A549 (cell line): ENCODE measurements at regions of chr14 and their contacts with region 1.

Region 1: DNA sequence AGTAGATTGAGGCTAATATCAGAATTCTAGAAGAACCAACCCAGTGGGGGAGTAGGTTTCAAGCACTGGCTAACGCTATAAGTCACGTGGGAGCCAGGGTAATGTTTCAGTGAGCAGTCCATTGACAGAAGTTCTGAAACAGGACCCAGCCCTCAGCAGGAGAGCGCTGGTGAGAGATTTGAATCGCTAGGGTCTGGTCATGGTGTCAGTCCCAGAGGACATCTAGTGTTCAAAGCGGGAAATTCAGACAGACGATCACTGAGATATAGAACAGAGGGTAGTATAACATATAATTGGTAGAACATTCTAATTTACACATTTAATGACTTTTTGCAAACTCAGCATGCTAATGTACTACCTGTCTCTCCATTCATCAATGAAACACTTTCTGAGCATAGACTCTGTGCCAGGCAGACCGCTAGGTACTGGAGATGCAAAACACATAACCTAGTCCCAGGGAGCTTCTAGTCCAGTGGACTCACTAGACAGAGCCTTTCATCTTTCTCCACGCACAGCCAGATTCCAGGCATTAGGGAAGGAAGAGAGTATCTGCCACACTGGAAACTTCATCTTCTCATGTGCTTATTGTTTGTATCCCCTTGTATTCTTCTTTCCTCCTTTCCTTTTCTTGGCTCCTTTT is 35.4 kb upstream of the RNASE3 start:
- DNase-seq: peak; percentile 69 to 83
- ATAC-seq: peak; percentile 97 to 98
- H3K4me3 ChIP-seq: no peak overlapping the region
- H3K27ac ChIP-seq: peak overlapping the region in 1 of 2 experiments; percentile 34; a peak in 2 of 6 replicates
- H3K4me1 ChIP-seq: peaks cover 26% of the 10 kb centered on the region
- CTCF ChIP-seq: peak; percentile 86
- EP300 ChIP-seq: no peak
- POLR2A ChIP-seq: no peak
- RAD21 ChIP-seq: peak; percentile 93

Region 2: DNA sequence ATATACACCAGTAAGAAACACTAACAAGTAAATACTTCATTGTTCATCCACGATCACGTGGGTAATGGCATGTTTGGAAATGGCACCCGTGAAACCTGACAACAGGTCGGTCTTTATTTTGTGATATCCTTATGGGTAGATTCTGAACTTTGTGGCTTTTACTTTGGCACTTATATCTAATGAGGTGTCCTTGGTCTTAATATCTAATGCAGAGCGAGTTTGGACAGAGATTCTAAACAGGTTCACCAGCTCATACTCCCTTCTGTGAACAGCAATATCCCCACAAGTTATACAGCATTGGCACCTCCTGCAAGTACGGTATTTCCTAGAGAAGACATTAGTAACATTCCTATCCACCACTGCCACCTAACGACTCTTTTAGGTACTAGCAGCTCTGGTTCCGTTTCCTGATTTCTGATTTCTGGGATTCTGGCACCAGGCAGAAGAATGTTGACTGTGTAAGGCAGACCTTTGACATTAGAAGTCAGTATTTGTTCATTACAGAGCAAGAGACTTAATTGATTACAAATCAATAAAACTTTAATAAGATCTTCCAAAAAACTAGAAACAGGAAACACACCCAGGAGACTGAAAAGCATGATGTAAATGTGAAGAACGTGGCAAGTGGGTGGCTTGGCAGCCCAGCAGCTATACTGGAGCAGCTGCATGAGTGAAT is 164.8 kb before region 1 on chr14:
- CTCF ChIA-PET with region 1: interaction called, 81 read pairs
- POLR2A ChIA-PET with region 1: no interaction called
- DNase-seq: peak; percentile 71 to 81
- ATAC-seq: peak; percentile 82 to 84
- H3K4me3 ChIP-seq: peak overlapping the region; percentile 5; the same call in 1 of the 3 replicates
- H3K27ac ChIP-seq: peak overlapping the region; percentile 2 to 26; a peak in 1 of 6 replicates
- H3K4me1 ChIP-seq: peaks cover 34% of the 10 kb centered on the region
- CTCF ChIP-seq: peak; percentile 88
- EP300 ChIP-seq: no peak
- POLR2A ChIP-seq: no peak
- RAD21 ChIP-seq: peak; percentile 88 to 92

Region 3: DNA sequence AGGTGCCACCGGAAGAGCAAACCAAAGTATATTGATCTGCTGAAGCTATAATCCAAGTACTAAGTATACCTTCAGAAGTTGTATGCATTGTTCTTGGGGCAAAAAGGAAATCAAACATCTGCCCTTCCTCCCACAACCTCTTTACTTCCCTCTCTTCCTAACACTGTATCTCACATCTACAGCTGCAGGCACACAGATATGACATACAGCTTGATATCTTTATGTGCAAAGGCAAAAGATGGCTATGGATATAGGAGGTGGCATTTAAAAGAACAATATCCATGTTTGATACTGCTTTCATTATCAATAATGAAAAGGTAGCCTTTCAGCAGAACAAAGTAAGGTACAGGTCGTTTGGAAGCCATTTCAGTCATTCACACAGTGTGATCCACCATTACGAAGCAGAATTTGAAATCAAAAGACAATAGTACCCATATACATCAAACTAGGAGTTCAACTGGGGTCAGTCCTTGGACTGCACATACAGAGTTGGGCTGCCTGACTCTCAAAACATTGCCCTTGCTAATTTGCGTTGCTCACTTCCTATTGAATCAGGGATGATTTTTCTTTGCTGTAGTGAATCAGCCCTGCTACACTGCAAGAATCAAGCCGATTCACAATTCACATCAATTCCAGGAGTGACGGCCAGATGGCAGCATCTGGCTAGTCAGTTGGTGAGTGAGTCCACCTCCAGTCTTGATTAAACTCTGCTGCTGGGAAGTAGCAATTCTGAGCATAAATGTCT is 158.3 kb before region 1 on chr14:
- CTCF ChIA-PET with region 1: interaction called, 81 read pairs
- POLR2A ChIA-PET with region 1: no interaction called
- DNase-seq: peak; percentile 67 to 79
- ATAC-seq: peak; percentile 95 to 96
- H3K4me3 ChIP-seq: no peak overlapping the region
- H3K27ac ChIP-seq: no peak overlapping the region
- H3K4me1 ChIP-seq: 0 out of 3 replicates have a peak, but pooled peaks cover 3% of the 10 kb centered on the region
- CTCF ChIP-seq: peak; percentile 83
- EP300 ChIP-seq: no peak
- POLR2A ChIP-seq: no peak
- RAD21 ChIP-seq: peak; percentile 88 to 93

Region 4: DNA sequence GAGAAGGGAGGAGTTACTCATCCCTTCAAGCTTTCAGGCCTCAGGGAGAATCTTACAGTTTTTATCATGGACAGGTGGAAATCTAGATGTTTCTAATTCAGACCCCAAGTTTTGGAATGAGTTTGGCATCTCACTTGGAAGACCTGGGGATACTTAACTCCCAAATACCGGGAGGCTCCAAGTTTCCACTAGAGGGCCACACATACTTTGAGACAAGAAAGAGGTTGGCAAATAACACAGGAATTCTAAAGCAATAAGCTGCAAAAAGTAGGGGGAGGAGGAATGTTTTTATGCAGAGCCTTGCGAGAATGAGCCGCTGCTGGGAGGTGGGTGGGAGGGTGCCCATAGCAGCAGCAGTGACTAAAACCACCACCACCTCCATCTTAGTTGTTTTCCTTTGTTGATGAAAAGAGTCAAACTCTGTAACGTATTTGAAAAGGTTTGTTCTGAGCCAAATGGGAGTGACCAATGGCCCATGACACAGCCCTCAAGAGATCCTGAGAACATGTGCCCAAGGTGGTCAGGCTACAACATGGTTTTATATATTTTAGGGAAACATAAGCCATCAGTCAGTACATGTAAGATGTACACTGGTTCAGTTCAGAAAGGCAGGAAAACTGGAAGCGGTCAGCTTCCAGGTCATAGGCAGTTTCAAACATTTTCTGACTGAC is 19.0 kb before region 1 on chr14:
- CTCF ChIA-PET with region 1: interaction called, 64 read pairs
- POLR2A ChIA-PET with region 1: no interaction called
- DNase-seq: peak; percentile 82 to 87
- ATAC-seq: peak; percentile 94 to 95
- H3K4me3 ChIP-seq: no peak overlapping the region
- H3K27ac ChIP-seq: peak overlapping the region; percentile 57 to 79
- H3K4me1 ChIP-seq: peaks cover 6% of the 10 kb centered on the region
- CTCF ChIP-seq: peak; percentile 73
- EP300 ChIP-seq: no peak
- POLR2A ChIP-seq: no peak
- RAD21 ChIP-seq: peak; percentile 83 to 84

Region 5: DNA sequence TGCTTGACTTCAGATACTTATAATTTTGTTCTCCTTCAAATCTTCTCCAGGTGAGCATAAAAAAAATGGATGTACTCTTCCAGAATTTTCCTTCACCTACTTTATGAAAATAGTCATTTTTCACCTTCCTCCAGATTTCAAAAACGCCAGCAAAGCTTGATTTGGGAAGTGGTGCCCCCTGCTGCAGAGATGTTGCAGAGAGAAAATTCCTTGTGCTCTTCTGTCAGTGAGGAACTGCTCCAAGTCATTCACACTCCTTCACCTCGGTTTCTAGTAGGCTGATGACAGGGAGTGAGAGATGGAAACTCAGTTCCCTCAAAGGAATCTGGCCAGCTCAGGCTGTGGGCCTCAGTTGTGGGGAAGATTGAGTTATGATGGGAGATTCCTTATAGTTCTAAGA is 11.2 kb after region 1 on chr14:
- CTCF ChIA-PET with region 1: interaction called, 44 read pairs
- POLR2A ChIA-PET with region 1: no interaction called
- DNase-seq: peak in 1 of 2 experiments; percentile 27
- ATAC-seq: peak in 1 of 2 experiments; percentile 70; a peak in 3 of 6 replicates
- H3K4me3 ChIP-seq: no peak overlapping the region
- H3K27ac ChIP-seq: no peak overlapping the region
- H3K4me1 ChIP-seq: no peaks in the 10 kb centered on the region
- CTCF ChIP-seq: peak; percentile 46
- EP300 ChIP-seq: no peak
- POLR2A ChIP-seq: no peak
- RAD21 ChIP-seq: peak; percentile 61 to 68

Region 6: DNA sequence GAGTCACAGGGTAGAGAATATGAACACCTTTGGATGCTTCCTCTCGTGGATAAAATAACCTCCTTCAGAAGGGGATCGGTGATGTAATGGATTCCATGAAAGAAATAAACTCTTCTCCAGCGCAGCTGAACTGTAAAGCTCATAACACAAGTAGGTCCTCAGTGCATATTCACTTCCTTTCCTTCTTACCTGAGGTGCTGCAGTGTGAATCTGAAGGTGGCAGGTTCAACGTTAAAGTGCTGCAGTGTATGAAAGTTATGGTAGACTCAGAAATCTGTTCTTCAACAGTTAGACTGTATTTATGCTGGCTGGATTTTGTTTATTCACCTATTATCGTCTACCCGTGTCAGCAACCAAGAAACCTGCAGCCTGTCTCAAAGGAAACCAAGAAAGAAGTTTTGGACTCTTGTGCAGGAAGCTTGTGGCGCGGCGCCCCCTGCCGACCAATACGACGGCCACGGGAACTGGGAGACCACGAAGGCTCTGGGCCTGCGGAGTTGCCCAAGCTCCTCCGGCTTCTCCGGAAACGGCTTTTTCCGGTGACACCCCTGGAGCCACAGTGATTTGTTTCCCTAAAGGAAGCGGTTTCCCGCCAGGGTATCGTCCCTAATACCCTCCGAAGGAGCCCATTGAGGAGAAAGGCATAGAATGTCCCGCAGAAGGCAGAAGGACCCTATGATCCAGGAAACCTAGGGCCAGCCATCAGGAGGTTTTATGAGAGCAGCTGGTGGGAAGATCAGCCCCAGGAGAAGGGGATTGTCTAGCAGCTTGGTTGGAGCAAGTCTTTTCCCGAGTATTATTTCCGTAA is 17.8 kb after region 1 on chr14:
- CTCF ChIA-PET with region 1: interaction called, 44 read pairs
- POLR2A ChIA-PET with region 1: no interaction called
- DNase-seq: peak; percentile 33 to 87
- ATAC-seq: peak; percentile 96 to 99
- H3K4me3 ChIP-seq: no peak overlapping the region
- H3K27ac ChIP-seq: 0 out of 6 replicates have a peak overlapping the region, but pooled peaks of 1 of the 2 experiments have one; percentile 25
- H3K4me1 ChIP-seq: no peaks in the 10 kb centered on the region
- CTCF ChIP-seq: peak; percentile 76
- EP300 ChIP-seq: no peak
- POLR2A ChIP-seq: no peak
- RAD21 ChIP-seq: peak; percentile 79 to 87

Region 7: GRCh38 chr14:21020977-21021600 is 165.3 kb after region 1 on chr14:
- CTCF ChIA-PET with region 1: no interaction called
- POLR2A ChIA-PET with region 1: no interaction called
- DNase-seq: no peak
- ATAC-seq: no peak
- H3K4me3 ChIP-seq: no peak overlapping the region
- H3K27ac ChIP-seq: no peak overlapping the region
- H3K4me1 ChIP-seq: 0 out of 3 replicates have a peak, but pooled peaks cover 3% of the 10 kb centered on the region
- CTCF ChIP-seq: no peak
- EP300 ChIP-seq: no peak
- POLR2A ChIP-seq: no peak
- RAD21 ChIP-seq: no peak